ENCODE measurements at regions of chr13 and their contacts with region 1.

Region 1: GRCh38 chr13:48334534-48335127 is 31.1 kb downstream of the RB1 start:
- DNase-seq: peak; percentile 17
- H3K4me3 ChIP-seq: no peak overlapping the region
- H3K27ac ChIP-seq: peak overlapping the region; percentile 59
- H3K4me1 ChIP-seq: peaks cover 17% of the 10 kb centered on the region
- H3K27me3 ChIP-seq: no peaks in the 10 kb centered on the region
- CTCF ChIP-seq: peak; percentile 42 to 59

Region 2: DNA sequence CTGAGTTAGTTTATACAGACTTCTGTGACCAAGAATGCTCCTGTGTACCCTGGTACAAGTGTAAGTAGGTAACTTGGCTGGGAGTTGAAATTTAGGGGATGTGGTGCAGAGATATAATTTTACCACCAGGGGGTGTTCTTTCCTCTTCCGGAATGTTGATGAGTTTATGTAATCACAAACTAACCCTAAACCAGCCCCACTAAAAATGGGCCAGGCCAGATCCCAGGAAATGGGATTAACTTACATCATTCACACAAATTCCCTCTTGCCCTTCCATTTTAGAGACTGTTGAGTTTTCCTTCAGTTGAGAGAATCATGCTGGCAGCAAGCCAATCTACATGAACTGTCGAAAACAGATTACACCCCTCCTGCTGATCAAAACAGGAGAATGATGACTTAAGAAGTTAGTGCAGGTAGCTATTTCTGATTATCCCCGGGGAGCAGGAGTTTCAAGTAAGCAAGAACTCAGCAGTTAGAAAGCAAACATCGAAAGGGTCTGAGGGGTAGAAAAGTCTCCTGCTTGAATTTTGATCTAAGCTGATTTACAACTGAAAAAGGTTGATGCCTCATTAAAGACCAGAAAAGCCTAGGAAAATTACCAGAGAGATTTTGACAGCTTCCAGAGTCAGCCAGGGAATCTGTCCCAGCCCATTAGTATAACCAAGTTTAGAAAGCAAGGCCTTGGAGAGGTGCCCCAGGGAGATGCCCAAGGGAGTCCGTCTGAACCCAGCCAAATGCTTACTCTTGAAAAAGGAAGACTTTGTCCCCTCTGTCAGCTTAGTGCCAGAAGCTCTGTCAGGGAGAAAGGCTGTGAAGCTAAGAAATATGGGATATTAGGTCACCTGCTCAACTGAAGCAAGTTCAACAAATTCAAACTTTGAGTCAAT is 207.4 kb before region 1 on chr13:
- CTCF ChIA-PET with region 1: no interaction called
- dilution Hi-C with region 1: no loop called
- in situ Hi-C with region 1: no loop called
- intact Hi-C with region 1: loop called (anchors 1 kb)
- DNase-seq: peak; percentile 67
- H3K4me3 ChIP-seq: no peak overlapping the region
- H3K27ac ChIP-seq: peak overlapping the region; percentile 29
- H3K4me1 ChIP-seq: peaks cover 24% of the 10 kb centered on the region
- H3K27me3 ChIP-seq: no peaks in the 10 kb centered on the region
- CTCF ChIP-seq: peak; percentile 61 to 72

Region 3: DNA sequence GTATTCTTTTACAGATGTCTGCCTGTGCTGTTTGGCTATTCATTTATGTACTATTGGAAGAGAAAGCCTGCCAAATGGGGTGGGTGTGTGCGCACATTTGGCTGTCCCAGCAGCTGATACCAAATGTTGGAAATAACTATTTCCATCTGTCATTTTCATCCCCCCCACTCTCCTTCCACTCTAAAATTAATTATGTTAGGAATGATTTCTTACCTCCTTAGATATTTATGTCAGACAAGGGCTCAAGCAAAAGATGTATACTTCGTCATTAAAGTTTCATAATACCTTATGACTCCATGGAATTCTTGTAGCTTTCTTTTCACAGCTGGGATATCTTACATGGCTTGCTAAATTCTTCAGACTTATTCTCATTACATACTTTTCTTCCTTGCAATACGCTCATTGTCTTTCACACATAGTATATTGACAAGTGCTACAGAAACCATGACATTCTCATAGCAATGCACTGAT is 83.0 kb before region 1 on chr13:
- CTCF ChIA-PET with region 1: no interaction called
- dilution Hi-C with region 1: no loop called
- in situ Hi-C with region 1: no loop called
- intact Hi-C with region 1: no loop called
- DNase-seq: no peak
- H3K4me3 ChIP-seq: no peak overlapping the region
- H3K27ac ChIP-seq: no peak overlapping the region
- H3K4me1 ChIP-seq: no peaks in the 10 kb centered on the region
- H3K27me3 ChIP-seq: no peaks in the 10 kb centered on the region
- CTCF ChIP-seq: no peak

Region 4: DNA sequence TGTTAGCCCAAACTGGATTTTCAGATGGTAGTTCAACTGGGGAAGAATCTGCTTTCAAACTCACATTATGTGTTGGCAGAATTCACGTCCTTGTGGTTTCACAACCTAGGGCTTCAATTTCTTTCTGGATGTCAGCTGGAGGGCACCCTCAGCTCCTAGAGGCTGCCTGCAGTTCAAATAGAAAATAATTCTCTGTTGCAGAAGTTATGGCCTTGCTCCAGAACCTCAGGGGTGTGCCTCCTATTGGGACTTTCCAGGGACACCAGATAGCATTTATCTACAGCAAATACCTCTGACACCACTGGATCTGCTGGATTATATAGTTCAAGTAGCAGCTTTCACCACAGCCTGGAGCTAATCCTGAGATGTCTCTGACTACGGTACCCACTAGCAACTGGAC is 42.9 kb before region 1 on chr13:
- CTCF ChIA-PET with region 1: no interaction called
- dilution Hi-C with region 1: no loop called
- in situ Hi-C with region 1: no loop called
- intact Hi-C with region 1: no loop called
- DNase-seq: no peak
- H3K4me3 ChIP-seq: no peak overlapping the region
- H3K27ac ChIP-seq: no peak overlapping the region
- H3K4me1 ChIP-seq: no peaks in the 10 kb centered on the region
- H3K27me3 ChIP-seq: no peaks in the 10 kb centered on the region
- CTCF ChIP-seq: no peak

Region 5: GRCh38 chr13:48303359-48304142 is 31.1 kb before region 1 on chr13 and contains the start of gene RB1:
- CTCF ChIA-PET with region 1: no interaction called
- dilution Hi-C with region 1: no loop called
- in situ Hi-C with region 1: no loop called
- intact Hi-C with region 1: loop called (anchors 2 kb)
- DNase-seq: peak; percentile 94
- H3K4me3 ChIP-seq: peak within 1 kb of the TSS; percentile 65 to 99 (median 86)
- H3K27ac ChIP-seq: peak within 1 kb of the TSS; percentile 97
- H3K4me1 ChIP-seq: peaks cover 18% of the 10 kb centered on the region
- H3K27me3 ChIP-seq: no peaks in the 10 kb centered on the region
- CTCF ChIP-seq: peak in 1 of 2 donors; percentile 1
- total RNA-seq, gene RB1: 34.7 to 48.6 TPM

Region 6: GRCh38 chr13:48400850-48401291 is 66.2 kb after region 1 on chr13:
- CTCF ChIA-PET with region 1: no interaction called
- dilution Hi-C with region 1: no loop called
- in situ Hi-C with region 1: no loop called
- intact Hi-C with region 1: loop called (anchors 2 kb)
- DNase-seq: peak; percentile 91
- H3K4me3 ChIP-seq: peak overlapping the region in 1 of 3 experiments; percentile 23
- H3K27ac ChIP-seq: peak overlapping the region; percentile 97
- H3K4me1 ChIP-seq: peaks cover 49% of the 10 kb centered on the region
- H3K27me3 ChIP-seq: no peaks in the 10 kb centered on the region
- CTCF ChIP-seq: no peak

Region 7: DNA sequence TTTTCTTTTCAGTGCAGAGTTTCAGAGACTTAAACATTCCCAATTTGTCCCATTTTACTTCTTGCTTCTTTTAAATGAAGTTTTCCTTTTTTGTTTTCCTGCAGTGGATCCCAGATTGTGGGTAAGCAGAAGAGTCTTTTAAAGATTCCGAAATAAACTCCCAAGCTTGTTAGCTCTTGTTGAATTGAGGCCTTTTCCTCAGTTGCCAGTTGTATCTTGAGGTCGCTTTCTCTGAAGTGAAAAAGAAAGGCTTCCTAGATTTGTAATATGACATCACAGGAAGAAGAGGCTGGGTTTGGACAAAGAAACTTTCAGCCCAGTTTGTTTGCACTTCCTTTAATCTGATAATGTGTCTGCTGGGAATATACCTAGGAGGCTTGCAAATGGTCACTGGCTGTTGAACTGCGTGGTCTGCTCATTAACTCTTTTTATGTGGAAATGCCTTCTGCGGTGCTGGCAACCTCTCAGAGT is 78.3 kb after region 1 on chr13 and contains the start of gene LPAR6:
- CTCF ChIA-PET with region 1: no interaction called
- dilution Hi-C with region 1: no loop called
- in situ Hi-C with region 1: no loop called
- intact Hi-C with region 1: loop called (anchors 5 kb)
- DNase-seq: peak; percentile 62
- H3K4me3 ChIP-seq: peak within 1 kb of the TSS; percentile 62 to 78 (median 67)
- H3K27ac ChIP-seq: peak within 1 kb of the TSS; percentile 85
- H3K4me1 ChIP-seq: no peaks in the 10 kb centered on the region
- H3K27me3 ChIP-seq: no peaks in the 10 kb centered on the region
- CTCF ChIP-seq: no peak
- total RNA-seq, gene LPAR6: 7.9 to 17.2 TPM

Region 8: DNA sequence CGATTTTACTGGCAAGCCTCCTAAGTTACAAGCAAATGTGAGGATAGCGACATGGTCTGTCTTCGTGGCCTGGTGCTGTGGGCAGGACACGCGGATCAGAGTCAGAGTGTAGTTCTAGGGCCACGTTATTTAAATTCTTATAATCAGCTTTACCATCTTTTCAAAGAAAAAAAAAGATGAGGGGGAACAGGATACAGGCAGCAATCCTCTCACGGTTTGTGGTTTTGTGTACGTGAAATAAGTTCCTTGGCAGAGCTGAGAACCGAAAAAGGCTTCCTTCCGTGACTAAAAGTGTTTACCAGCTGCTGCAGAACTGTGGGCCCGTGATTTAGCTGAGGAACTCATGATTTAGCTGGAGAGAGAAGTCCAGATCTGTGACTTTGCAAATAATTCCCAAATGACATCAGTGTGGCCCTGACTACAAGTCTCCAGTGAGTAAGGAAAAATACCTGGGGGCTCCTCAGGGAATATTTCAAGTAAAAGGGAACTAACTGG is 171.0 kb after region 1 on chr13:
- CTCF ChIA-PET with region 1: no interaction called
- dilution Hi-C with region 1: no loop called
- in situ Hi-C with region 1: no loop called
- intact Hi-C with region 1: loop called (anchors 1 kb)
- DNase-seq: peak; percentile 51
- H3K4me3 ChIP-seq: no peak overlapping the region
- H3K27ac ChIP-seq: peak overlapping the region; percentile 53
- H3K4me1 ChIP-seq: peaks cover 54% of the 10 kb centered on the region
- H3K27me3 ChIP-seq: no peaks in the 10 kb centered on the region
- CTCF ChIP-seq: no peak

Region 9: GRCh38 chr13:48532506-48533499 is 198.2 kb after region 1 on chr13 and contains the start of gene RCBTB2:
- CTCF ChIA-PET with region 1: no interaction called
- dilution Hi-C with region 1: no loop called
- in situ Hi-C with region 1: no loop called
- intact Hi-C with region 1: loop called (anchors 1 kb)
- DNase-seq: peak; percentile 95
- H3K4me3 ChIP-seq: peak within 1 kb of the TSS; percentile 65 to 78 (median 75)
- H3K27ac ChIP-seq: peak within 1 kb of the TSS; percentile 87
- H3K4me1 ChIP-seq: peaks cover 13% of the 10 kb centered on the region
- H3K27me3 ChIP-seq: no peaks in the 10 kb centered on the region
- CTCF ChIP-seq: peak in 1 of 2 donors; percentile 6
- total RNA-seq, gene RCBTB2: 4.9 to 12.0 TPM

Measured in mammary epithelial cell (primary cell).